GM12878 (cell line): ENCODE measurements at regions of chr1 and their contacts with region 1.

Region 1: GRCh38 chr1:27568300-27569087 is 35.5 kb downstream of the AHDC1 start:
- DNase-seq: peak; percentile 60
- ATAC-seq: peak; percentile 95
- H3K4me3 ChIP-seq: peak overlapping the region; percentile 52; the same call in 1 of the 2 replicates
- H3K27ac ChIP-seq: no peak overlapping the region
- H3K4me1 ChIP-seq: peaks cover 7% of the 10 kb centered on the region
- H3K27me3 ChIP-seq: no peaks in the 10 kb centered on the region
- CTCF ChIP-seq: peak; percentile 64 to 69 (median 68)
- EP300 ChIP-seq: no peak
- POLR2A ChIP-seq: no peak
- RAD21 ChIP-seq: peak; percentile 46

Region 2: GRCh38 chr1:27513958-27514357 is 54.5 kb before region 1 on chr1:
- CTCF ChIA-PET with region 1: interaction called, 3 read pairs
- POLR2A ChIA-PET with region 1: no interaction called
- RAD21 ChIA-PET with region 1: no interaction called
- SMC1A ChIA-PET with region 1: no interaction called
- in situ Hi-C with region 1: loop called (anchors 5 kb)
- intact Hi-C with region 1: no loop called
- DNase-seq: no peak
- ATAC-seq: no peak
- H3K4me3 ChIP-seq: no peak overlapping the region
- H3K27ac ChIP-seq: no peak overlapping the region
- H3K4me1 ChIP-seq: no peaks in the 10 kb centered on the region; the same call in 1 of the 2 replicates
- H3K27me3 ChIP-seq: no peaks in the 10 kb centered on the region
- CTCF ChIP-seq: no peak
- EP300 ChIP-seq: no peak
- POLR2A ChIP-seq: no peak
- RAD21 ChIP-seq: no peak

Region 3: GRCh38 chr1:27581823-27582243 is 13.3 kb after region 1 on chr1:
- CTCF ChIA-PET with region 1: interaction called, 13 read pairs
- POLR2A ChIA-PET with region 1: interaction called, 4 read pairs
- RAD21 ChIA-PET with region 1: interaction called, 3 read pairs
- SMC1A ChIA-PET with region 1: no interaction called
- in situ Hi-C with region 1: no loop called
- intact Hi-C with region 1: no loop called
- DNase-seq: no peak
- ATAC-seq: no peak
- H3K4me3 ChIP-seq: no peak overlapping the region
- H3K27ac ChIP-seq: no peak overlapping the region
- H3K4me1 ChIP-seq: no peaks in the 10 kb centered on the region
- H3K27me3 ChIP-seq: no peaks in the 10 kb centered on the region
- CTCF ChIP-seq: no peak
- EP300 ChIP-seq: no peak
- POLR2A ChIP-seq: no peak
- RAD21 ChIP-seq: no peak